Activated T-helper 2 cell treated with anti-CD3 and anti-CD28 coated beads, Interferon-gamma antibody, Interleukin-2, Interleukin-4, amounts not matched to agents 10 μg/mL and 5 μg/mL and 100 μg/mL, durations not matched to agents 14 hours and 24 hours and 36 hours (primary cell): ENCODE measurements at regions of chr1 and their contacts with region 1.

Region 1: GRCh38 chr1:77978969-77979876 is at the start of gene FUBP1:
- DNase-seq: peak; percentile 95
- H3K4me3 Mint-ChIP-seq: no peak within 1 kb of the TSS
- H3K27ac Mint-ChIP-seq: no peak within 1 kb of the TSS
- H3K4me1 Mint-ChIP-seq: peaks cover 43% of the 10 kb centered on the region
- H3K27me3 Mint-ChIP-seq: no peaks in the 10 kb centered on the region
- total RNA-seq, gene FUBP1: 262 and 269 TPM in 2 replicates

Region 2: GRCh38 chr1:77759071-77760028 is 219.9 kb before region 1 on chr1 and contains the start of gene USP33:
- intact Hi-C with region 1: loop called (anchors 1 kb)
- DNase-seq: peak; percentile 84
- H3K4me3 Mint-ChIP-seq: peak within 1 kb of the TSS; percentile 90
- H3K27ac Mint-ChIP-seq: peak within 1 kb of the TSS; percentile 87
- H3K4me1 Mint-ChIP-seq: peaks cover 34% of the 10 kb centered on the region
- H3K27me3 Mint-ChIP-seq: peaks cover 6% of the 10 kb centered on the region
- total RNA-seq, gene USP33: 38.4 and 39.8 TPM in 2 replicates

Region 3: DNA sequence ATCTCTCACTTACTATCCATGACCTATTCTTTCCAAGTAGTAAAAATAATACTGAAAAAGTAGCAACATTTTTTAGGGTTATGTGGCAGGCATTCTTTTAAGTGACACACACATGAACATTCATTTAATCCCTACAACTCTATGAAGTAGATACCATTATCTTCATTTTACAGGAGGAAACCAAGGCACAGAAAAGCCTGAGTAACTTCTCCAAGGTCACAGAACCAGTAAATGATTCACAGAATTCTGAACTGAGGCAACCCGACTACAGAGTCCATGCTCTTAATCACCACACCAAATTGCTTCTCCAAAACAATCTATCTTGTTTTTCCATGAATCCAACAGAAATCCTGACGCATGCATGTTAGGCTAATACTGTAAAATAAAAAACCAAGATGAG is 17.8 kb before region 1 on chr1:
- intact Hi-C with region 1: loop called (anchors 2 kb)
- DNase-seq: no peak
- H3K4me3 Mint-ChIP-seq: no peak overlapping the region
- H3K27ac Mint-ChIP-seq: peak overlapping the region; percentile 28
- H3K4me1 Mint-ChIP-seq: peaks cover 20% of the 10 kb centered on the region
- H3K27me3 Mint-ChIP-seq: no peaks in the 10 kb centered on the region

Region 4: GRCh38 chr1:78004719-78005447 is 25.7 kb after region 1 on chr1 and contains the start of gene DNAJB4:
- intact Hi-C with region 1: loop called (anchors 1 kb)
- DNase-seq: peak; percentile 63
- H3K4me3 Mint-ChIP-seq: peak within 1 kb of the TSS; percentile 94
- H3K27ac Mint-ChIP-seq: peak within 1 kb of the TSS; percentile 98
- H3K4me1 Mint-ChIP-seq: peaks cover 33% of the 10 kb centered on the region
- H3K27me3 Mint-ChIP-seq: no peaks in the 10 kb centered on the region
- total RNA-seq, gene DNAJB4: 12.5 and 14.6 TPM in 2 replicates

Region 5: DNA sequence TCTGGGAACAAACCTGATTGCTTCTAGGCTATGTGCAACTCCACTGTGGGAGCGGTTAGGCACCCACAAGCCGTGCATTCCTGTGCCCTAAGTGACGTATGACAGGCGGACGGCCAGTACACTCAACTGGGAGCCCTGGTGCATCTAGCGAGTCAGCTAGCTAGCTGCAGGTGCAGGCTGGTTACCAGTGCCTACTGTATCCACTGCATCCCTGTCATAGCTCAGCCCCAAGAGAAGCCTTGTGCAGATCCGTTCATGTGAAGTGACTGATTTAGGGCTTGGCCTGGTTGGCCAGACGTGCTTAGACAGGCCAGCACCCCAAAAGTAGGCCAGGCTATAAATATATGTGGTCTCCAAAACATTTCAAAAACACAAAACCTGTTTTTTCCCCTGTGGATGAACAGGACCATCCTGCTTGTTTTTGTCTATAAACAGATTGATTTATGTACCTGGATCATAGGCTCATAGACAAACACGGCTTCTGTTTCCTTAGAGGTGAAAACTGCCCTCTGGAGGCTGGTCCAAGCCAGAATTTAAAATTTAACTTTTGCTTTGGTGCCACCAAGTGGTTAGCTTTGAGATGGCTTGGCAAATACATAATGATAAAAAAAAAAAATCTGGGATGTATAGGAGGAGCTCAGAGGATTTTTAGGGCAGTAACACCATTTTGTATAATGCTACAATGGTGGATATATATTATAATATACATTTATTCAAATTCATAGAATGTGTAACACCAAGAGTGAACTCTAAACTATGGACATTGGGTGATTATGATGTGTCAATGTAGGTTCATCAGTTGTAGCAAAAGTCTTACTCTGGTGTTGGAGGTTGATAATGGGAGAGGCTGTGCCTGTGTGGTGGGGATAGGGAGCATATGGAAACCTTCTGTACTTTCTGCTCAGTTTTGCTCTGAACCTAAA is 135.1 kb after region 1 on chr1:
- intact Hi-C with region 1: loop called (anchors 10 kb)
- DNase-seq: peak; percentile 41
- H3K4me3 Mint-ChIP-seq: no peak overlapping the region
- H3K27ac Mint-ChIP-seq: no peak overlapping the region
- H3K4me1 Mint-ChIP-seq: peaks cover 5% of the 10 kb centered on the region
- H3K27me3 Mint-ChIP-seq: peaks cover 2% of the 10 kb centered on the region

Region 6: GRCh38 chr1:78617615-78618026 is 638.4 kb after region 1 on chr1:
- intact Hi-C with region 1: loop called (anchors 10 kb)
- DNase-seq: peak; percentile 47
- H3K4me3 Mint-ChIP-seq: no peak overlapping the region
- H3K27ac Mint-ChIP-seq: no peak overlapping the region
- H3K4me1 Mint-ChIP-seq: peaks cover 38% of the 10 kb centered on the region
- H3K27me3 Mint-ChIP-seq: peaks cover 12% of the 10 kb centered on the region